MCF 10A (cell line): ENCODE measurements at regions of chr19 and their contacts with region 1.

Region 1: GRCh38 chr19:10602330-10603083 is 15.4 kb upstream of the AP1M2 start:
- DNase-seq: peak; percentile 75
- H3K4me3 Mint-ChIP-seq: peak overlapping the region; percentile 60
- H3K27ac Mint-ChIP-seq: no peak overlapping the region
- H3K4me1 Mint-ChIP-seq: no peaks in the 10 kb centered on the region
- H3K27me3 Mint-ChIP-seq: peaks cover 15% of the 10 kb centered on the region
- CTCF ChIP-seq: no peak

Region 2: GRCh38 chr19:10612491-10613119 is 10.1 kb after region 1 on chr19:
- CTCF ChIA-PET with region 1: no interaction called
- POLR2A ChIA-PET with region 1: no interaction called
- intact Hi-C with region 1: loop called (anchors 2 kb)
- DNase-seq: no peak
- H3K4me3 Mint-ChIP-seq: no peak overlapping the region
- H3K27ac Mint-ChIP-seq: no peak overlapping the region
- H3K4me1 Mint-ChIP-seq: peaks cover 3% of the 10 kb centered on the region
- H3K27me3 Mint-ChIP-seq: no peaks in the 10 kb centered on the region
- CTCF ChIP-seq: no peak